A673 (cell line): ENCODE measurements at regions of chr5 and their contacts with region 1.

Region 1: DNA sequence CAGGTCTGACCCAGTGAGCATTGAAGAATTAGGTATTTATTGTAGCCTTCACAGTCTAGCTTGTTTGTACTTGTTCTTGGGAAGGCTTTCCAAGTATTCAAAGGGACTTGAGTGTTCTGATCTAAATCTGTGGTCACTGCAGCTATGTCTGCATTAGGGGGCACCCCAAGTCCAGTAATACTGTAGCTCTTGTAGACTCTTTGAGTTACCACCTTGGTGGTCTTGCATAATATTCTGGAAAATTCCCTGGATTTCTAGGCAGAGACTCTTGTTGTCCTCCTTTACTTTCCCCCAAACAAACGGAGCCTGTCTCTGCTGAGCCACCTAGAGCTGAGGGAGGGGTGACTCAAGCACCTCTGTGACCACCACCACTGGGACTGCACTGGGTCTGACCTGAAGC is 149.5 kb upstream of the DHFR start:
- DNase-seq: peak; percentile 14
- H3K4me3 ChIP-seq: no peak overlapping the region
- H3K27ac ChIP-seq: no peak overlapping the region
- H3K4me1 ChIP-seq: no peaks in the 10 kb centered on the region
- H3K27me3 ChIP-seq: no peaks in the 10 kb centered on the region
- CTCF ChIP-seq: 0 out of 2 replicates have a peak, but pooled peaks have one; percentile 12

Region 2: DNA sequence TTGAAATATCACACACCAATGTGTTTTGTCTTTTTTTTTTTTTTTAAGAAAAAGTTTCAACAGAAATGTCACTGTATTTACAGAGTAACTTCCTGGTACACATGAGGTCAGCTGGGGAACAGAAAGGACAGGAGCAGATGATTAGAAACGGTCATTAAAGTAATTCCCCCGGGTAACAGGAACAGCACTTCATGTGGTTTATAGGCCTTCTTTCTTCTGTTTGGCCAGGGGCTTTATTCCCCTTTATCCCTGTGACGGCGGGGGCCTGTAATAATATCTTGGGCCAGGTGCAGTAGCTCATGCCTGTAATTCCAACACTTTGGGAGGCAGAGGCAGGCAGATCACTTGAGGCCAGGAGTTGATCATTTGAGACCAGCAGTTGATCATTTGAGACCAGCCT is 180.3 kb before region 1 on chr5:
- CTCF ChIA-PET with region 1: no interaction called
- POLR2A ChIA-PET with region 1: no interaction called
- intact Hi-C with region 1: no loop called
- DNase-seq: peak; percentile 9
- H3K4me3 ChIP-seq: no peak overlapping the region
- H3K27ac ChIP-seq: no peak overlapping the region
- H3K4me1 ChIP-seq: no peaks in the 10 kb centered on the region
- H3K27me3 ChIP-seq: no peaks in the 10 kb centered on the region
- CTCF ChIP-seq: no peak

Region 3: DNA sequence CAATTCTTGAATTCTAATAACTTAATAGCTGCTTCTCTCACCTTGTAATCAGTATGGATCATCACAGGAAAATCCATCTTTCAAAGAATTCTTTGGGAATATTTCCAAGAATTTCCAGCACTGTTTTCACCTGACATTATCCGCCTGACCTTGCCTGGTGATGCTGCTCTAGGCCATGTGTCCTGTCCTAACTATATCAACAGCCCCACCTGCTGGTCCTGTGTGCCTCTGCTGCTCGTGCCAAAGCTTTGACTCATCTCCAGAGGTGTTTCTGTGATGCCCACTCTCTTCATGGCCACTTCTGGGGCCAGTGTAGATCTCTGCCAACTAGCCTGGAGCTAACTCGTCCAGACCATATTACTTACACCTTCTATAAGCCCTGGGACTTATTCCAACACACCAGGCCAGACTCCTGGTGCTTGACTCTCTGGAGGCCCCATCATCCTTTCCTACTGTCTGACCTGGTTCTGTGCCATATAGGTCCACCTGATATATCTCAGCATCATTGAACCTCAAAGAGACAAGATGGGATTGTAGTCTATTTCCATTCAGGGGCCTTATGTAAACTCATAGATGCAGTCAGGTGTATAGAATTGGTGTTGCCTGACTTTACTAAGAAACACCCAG is 361.3 kb after region 1 on chr5:
- CTCF ChIA-PET with region 1: no interaction called
- POLR2A ChIA-PET with region 1: no interaction called
- intact Hi-C with region 1: loop called (anchors 10 kb)
- DNase-seq: peak; percentile 77
- H3K4me3 ChIP-seq: no peak overlapping the region
- H3K27ac ChIP-seq: no peak overlapping the region
- H3K4me1 ChIP-seq: no peaks in the 10 kb centered on the region
- H3K27me3 ChIP-seq: no peaks in the 10 kb centered on the region
- CTCF ChIP-seq: peak; percentile 90

Region 4: GRCh38 chr5:81194633-81195333 is 390.5 kb after region 1 on chr5:
- CTCF ChIA-PET with region 1: no interaction called
- POLR2A ChIA-PET with region 1: no interaction called
- intact Hi-C with region 1: loop called (anchors 10 kb)
- DNase-seq: peak; percentile 89
- H3K4me3 ChIP-seq: no peak overlapping the region
- H3K27ac ChIP-seq: no peak overlapping the region
- H3K4me1 ChIP-seq: peaks cover 5% of the 10 kb centered on the region
- H3K27me3 ChIP-seq: no peaks in the 10 kb centered on the region
- CTCF ChIP-seq: peak; percentile 98